ENCODE measurements at regions of chr5 and their contacts with region 1.

Region 1: DNA sequence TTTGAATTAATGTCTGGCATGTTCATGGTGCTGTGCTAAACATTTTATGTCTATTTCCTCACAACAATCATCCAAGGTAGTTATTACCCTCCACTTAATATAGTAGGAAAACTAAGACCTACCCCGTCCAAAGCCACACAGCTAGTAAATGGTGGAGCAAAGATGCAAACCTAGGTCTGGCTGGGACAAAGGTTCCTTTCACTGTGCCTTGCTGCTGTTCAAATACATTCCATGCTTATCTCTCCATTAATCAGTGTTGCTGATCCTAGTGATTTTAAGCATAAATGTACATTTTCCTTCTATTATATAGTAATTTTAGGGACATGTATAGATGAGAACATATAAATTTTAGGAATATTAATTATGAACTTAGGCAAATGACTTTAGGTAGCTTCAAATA is 38.7 kb downstream of the CCDC125 start:
- DNase-seq: no peak
- H3K4me3 ChIP-seq: no peak overlapping the region
- H3K27ac ChIP-seq: no peak overlapping the region
- H3K4me1 ChIP-seq: no peaks in the 10 kb centered on the region
- H3K27me3 ChIP-seq: no peaks in the 10 kb centered on the region
- CTCF ChIP-seq: no peak

Region 2: GRCh38 chr5:68077349-68077894 is 1216.5 kb before region 1 on chr5:
- CTCF ChIA-PET with region 1: no interaction called
- dilution Hi-C with region 1: no loop called
- in situ Hi-C with region 1: no loop called
- intact Hi-C with region 1: no loop called
- DNase-seq: no peak
- H3K4me3 ChIP-seq: no peak overlapping the region
- H3K27ac ChIP-seq: no peak overlapping the region
- H3K4me1 ChIP-seq: no peaks in the 10 kb centered on the region
- H3K27me3 ChIP-seq: no peaks in the 10 kb centered on the region
- CTCF ChIP-seq: no peak

Region 3: GRCh38 chr5:69202497-69202896 is 91.4 kb before region 1 on chr5:
- CTCF ChIA-PET with region 1: no interaction called
- dilution Hi-C with region 1: loop called (anchors 5 kb)
- in situ Hi-C with region 1: no loop called
- intact Hi-C with region 1: no loop called
- DNase-seq: no peak
- H3K4me3 ChIP-seq: no peak overlapping the region
- H3K27ac ChIP-seq: no peak overlapping the region
- H3K4me1 ChIP-seq: no peaks in the 10 kb centered on the region
- H3K27me3 ChIP-seq: no peaks in the 10 kb centered on the region
- CTCF ChIP-seq: no peak

Region 4: GRCh38 chr5:69250598-69250997 is 43.3 kb before region 1 on chr5:
- CTCF ChIA-PET with region 1: no interaction called
- dilution Hi-C with region 1: loop called (anchors 5 kb)
- in situ Hi-C with region 1: no loop called
- intact Hi-C with region 1: no loop called
- DNase-seq: no peak
- H3K4me3 ChIP-seq: no peak overlapping the region
- H3K27ac ChIP-seq: no peak overlapping the region
- H3K4me1 ChIP-seq: no peaks in the 10 kb centered on the region
- H3K27me3 ChIP-seq: no peaks in the 10 kb centered on the region
- CTCF ChIP-seq: no peak

Region 5: DNA sequence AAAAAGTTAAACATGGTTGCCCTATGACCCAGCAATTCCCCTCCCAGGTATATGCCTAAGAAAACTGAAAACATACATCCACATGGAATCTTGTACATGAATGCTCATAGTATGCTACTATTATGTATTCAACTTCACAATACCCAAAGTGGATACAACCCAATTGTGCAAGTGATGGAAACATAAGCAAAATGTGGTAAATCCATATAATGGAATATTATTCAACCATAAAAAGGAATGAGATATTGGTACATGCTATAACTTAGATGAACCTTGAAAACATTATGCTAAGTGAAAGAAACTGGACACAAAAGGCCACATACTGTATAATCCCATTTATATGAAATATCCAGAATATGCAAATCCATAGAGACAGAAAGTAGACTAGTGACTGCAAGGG is 56.8 kb after region 1 on chr5:
- CTCF ChIA-PET with region 1: no interaction called
- dilution Hi-C with region 1: loop called (anchors 5 kb)
- in situ Hi-C with region 1: no loop called
- intact Hi-C with region 1: no loop called
- DNase-seq: no peak
- H3K4me3 ChIP-seq: no peak overlapping the region
- H3K27ac ChIP-seq: no peak overlapping the region
- H3K4me1 ChIP-seq: no peaks in the 10 kb centered on the region
- H3K27me3 ChIP-seq: no peaks in the 10 kb centered on the region
- CTCF ChIP-seq: no peak